Colonic mucosa (tissue), 4 donors: ENCODE measurements at regions of chrX and their contacts with region 1.

Region 1: DNA sequence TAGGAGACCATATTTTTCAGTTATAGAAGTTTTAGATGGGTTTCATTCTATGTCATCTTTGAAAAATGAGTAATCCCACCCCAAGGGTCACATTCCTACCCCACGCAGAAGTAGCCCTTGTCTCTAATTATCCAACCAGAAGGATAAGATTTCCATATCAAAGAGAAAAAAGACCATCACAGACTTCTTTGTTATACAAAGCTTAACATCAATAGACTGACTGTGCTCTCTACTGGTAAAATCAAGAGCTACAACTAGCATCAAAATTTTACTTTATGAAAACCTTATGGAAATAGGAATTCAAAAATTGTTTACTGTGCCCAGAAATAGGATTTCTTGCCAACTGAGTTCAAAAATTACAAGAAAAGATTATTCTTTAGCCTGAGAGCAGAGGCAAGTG is 24.9 kb downstream of the TNMD start:
- DNase-seq: no peak
- H3K4me3 ChIP-seq: no peak overlapping the region
- H3K27ac ChIP-seq: no peak overlapping the region
- H3K4me1 ChIP-seq: no peaks in the 10 kb centered on the region
- H3K27me3 ChIP-seq: no peaks in the 10 kb centered on the region
- CTCF ChIP-seq: no peak

Region 2: GRCh38 chrX:100296183-100296753 is 313.3 kb before region 1 on chrX:
- intact Hi-C with region 1: no loop called
- DNase-seq: no peak
- H3K4me3 ChIP-seq: no peak overlapping the region
- H3K27ac ChIP-seq: no peak overlapping the region
- H3K4me1 ChIP-seq: no peaks in the 10 kb centered on the region
- H3K27me3 ChIP-seq: no peaks in the 10 kb centered on the region
- CTCF ChIP-seq: no peak

Region 3: DNA sequence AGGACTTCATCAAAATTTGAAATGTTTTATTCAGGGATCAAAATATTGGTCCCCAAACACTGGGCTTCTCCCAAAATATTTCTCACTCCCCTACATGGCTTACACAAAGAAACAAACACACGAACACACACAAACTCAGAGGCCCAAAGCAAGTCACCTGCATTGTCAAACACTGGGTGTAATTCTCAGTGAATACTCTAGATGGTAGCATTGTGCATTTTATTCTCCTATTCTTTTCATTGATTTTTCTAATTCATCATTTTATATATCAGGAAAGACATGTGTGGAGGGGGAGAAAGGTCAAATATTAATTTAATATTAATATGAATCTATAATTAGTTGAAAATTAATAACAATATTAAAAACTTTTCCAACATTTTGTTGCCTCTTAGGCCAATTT is 97.1 kb before region 1 on chrX:
- intact Hi-C with region 1: loop called (anchors 5 kb)
- DNase-seq: no peak
- H3K4me3 ChIP-seq: no peak overlapping the region
- H3K27ac ChIP-seq: no peak overlapping the region
- H3K4me1 ChIP-seq: no peaks in the 10 kb centered on the region
- H3K27me3 ChIP-seq: no peaks in the 10 kb centered on the region
- CTCF ChIP-seq: peak; percentile 68

Region 4: DNA sequence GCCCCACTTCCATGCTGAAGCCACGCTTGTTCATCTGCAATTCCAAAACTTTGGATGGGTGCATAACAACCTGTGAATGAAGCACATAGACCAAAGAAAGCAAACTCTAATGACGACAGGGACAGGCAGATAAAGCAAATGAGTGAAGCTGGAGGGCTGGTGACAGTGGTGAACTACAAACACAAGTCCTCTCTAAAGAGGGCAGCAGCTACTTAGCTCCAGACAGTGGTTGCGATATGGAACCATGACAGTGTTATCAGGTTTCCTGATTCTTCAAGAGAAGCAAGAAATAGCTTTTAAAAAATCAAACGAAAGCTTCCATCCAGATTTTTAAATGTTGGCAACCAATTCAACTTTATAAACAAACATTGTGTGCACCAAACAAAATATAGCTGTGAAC is 240.7 kb after region 1 on chrX:
- intact Hi-C with region 1: no loop called
- DNase-seq: no peak
- H3K4me3 ChIP-seq: no peak overlapping the region
- H3K27ac ChIP-seq: no peak overlapping the region
- H3K4me1 ChIP-seq: no peaks in the 10 kb centered on the region
- H3K27me3 ChIP-seq: no peaks in the 10 kb centered on the region
- CTCF ChIP-seq: no peak